B cell (primary cell): ENCODE measurements at regions of chr19 and their contacts with region 1.

Region 1: DNA sequence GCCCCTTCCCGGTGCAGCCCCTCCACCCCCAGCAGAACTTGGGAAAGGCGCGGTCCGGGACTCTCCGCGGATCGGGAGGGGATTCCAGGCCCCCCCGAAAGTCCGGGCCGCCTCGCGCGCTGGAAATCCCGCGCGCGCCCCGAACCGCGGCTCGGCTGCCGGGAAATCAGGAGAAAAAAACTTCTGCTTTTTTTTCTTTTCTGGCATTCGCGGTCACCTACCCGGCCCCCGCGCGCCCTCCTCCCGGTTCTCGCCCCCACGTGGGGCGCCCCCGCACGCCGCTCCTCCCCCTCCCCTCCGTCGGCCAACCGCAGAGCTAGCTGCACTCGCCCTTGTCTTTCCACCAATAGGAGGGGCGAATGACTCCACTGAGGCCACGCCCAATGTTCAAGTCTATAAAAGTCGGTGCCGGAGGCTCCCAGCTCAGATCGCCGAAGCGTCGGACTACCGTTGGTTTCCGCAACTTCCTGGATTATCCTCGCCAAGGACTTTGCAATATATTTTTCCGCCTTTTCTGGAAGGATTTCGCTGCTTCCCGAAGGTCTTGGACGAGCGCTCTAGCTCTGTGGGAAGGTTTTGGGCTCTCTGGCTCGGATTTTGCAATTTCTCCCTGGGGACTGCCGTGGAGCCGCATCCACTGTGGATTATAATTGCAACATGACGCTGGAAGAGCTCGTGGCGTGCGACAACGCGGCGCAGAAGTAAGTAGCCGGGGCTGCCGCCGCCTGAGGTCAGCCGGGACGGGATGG is at the start of gene GADD45B:
- DNase-seq: peak; percentile 99
- ATAC-seq: peak; percentile 71
- H3K4me3 ChIP-seq: peak within 1 kb of the TSS; percentile 94 to 100 (median 100)
- H3K4me3 Mint-ChIP-seq: peak within 1 kb of the TSS; percentile 93
- H3K27ac ChIP-seq: peak within 1 kb of the TSS; percentile 72 to 74
- H3K27ac Mint-ChIP-seq: peak within 1 kb of the TSS; percentile 93
- H3K4me1 ChIP-seq: peaks cover 30 to 47% of the 10 kb centered on the region in 2 donors
- H3K4me1 Mint-ChIP-seq: peaks cover 34% of the 10 kb centered on the region
- H3K27me3 ChIP-seq: no peaks in the 10 kb centered on the region
- H3K27me3 Mint-ChIP-seq: no peaks in the 10 kb centered on the region
- CTCF ChIP-seq: no peak
- total RNA-seq, gene GADD45B: 166 and 167 TPM in 2 replicates

Region 2: DNA sequence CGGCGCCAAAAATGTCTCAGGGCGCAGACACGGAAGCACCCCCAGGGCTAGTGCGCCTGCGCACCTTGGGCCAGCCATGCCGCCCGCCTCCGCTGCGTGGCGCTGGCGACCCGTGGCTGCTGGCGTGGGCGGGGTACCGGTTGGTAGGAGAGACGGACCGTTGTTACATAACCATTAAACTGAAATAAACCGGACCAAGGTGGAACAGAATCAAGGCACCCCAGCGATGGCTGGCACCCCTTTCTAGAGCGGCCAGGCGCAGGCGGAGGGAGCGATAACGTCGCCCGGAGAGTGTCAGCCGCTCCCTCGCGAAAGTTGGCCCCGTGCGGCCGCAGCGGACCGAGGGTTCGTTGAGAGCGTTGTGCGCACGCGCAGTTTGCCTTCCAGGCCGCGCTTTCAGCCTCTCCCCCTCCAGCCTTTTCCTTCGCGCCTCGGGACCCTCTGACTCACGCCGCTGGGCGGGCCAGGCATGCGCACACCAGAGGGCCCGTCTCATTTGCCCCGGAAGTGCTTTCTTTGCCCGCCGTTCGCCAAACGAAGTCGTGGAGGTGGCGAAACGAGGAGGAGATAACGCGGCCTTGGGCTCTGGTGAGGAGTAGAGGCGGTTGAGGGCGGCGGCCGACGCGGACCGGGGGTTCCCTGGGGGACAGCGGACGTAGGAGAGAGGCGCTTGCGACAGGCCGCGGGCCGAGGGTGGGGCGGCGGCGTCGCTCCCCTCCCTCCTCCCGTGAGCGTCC is 239.4 kb before region 1 on chr19 and contains the starts of genes PLEKHJ1 and SF3A2:
- CTCF ChIA-PET with region 1: no interaction called
- POLR2A ChIA-PET with region 1: no interaction called
- intact Hi-C with region 1: loop called (anchors 2 kb)
- DNase-seq: peak; percentile 99
- ATAC-seq: peak; percentile 83
- H3K4me3 ChIP-seq: peak within 1 kb of the TSS; percentile 19 to 94 (median 70)
- H3K4me3 Mint-ChIP-seq: peak within 1 kb of the TSS; percentile 93
- H3K27ac ChIP-seq: peak within 1 kb of the TSS; percentile 97 to 99
- H3K27ac Mint-ChIP-seq: peak within 1 kb of the TSS; percentile 98
- H3K4me1 ChIP-seq: peaks cover 46 to 66% of the 10 kb centered on the region in 2 donors
- H3K4me1 Mint-ChIP-seq: peaks cover 65% of the 10 kb centered on the region
- H3K27me3 ChIP-seq: no peaks in the 10 kb centered on the region
- H3K27me3 Mint-ChIP-seq: no peaks in the 10 kb centered on the region
- CTCF ChIP-seq: peak; percentile 98
- total RNA-seq, gene PLEKHJ1: 82.4 and 86.7 TPM in 2 replicates
- total RNA-seq, gene SF3A2: 129 and 140 TPM in 2 replicates

Region 3: GRCh38 chr19:2294611-2295335 is 181.1 kb before region 1 on chr19:
- CTCF ChIA-PET with region 1: no interaction called
- POLR2A ChIA-PET with region 1: no interaction called
- intact Hi-C with region 1: no loop called
- DNase-seq: no peak
- ATAC-seq: no peak
- H3K4me3 ChIP-seq: peak overlapping the region in 1 of 5 experiments; percentile 9
- H3K4me3 Mint-ChIP-seq: peak overlapping the region; percentile 81
- H3K27ac ChIP-seq: peak overlapping the region in 1 of 2 donors; percentile 55
- H3K27ac Mint-ChIP-seq: peak overlapping the region; percentile 64
- H3K4me1 ChIP-seq: peaks cover 27 to 60% of the 10 kb centered on the region in 2 donors
- H3K4me1 Mint-ChIP-seq: peaks cover 38% of the 10 kb centered on the region
- H3K27me3 ChIP-seq: no peaks in the 10 kb centered on the region
- H3K27me3 Mint-ChIP-seq: no peaks in the 10 kb centered on the region
- CTCF ChIP-seq: no peak

Region 4: GRCh38 chr19:2399582-2399981 is 76.3 kb before region 1 on chr19:
- CTCF ChIA-PET with region 1: no interaction called
- POLR2A ChIA-PET with region 1: no interaction called
- intact Hi-C with region 1: no loop called
- DNase-seq: no peak
- ATAC-seq: no peak
- H3K4me3 ChIP-seq: no peak overlapping the region
- H3K4me3 Mint-ChIP-seq: no peak overlapping the region
- H3K27ac ChIP-seq: no peak overlapping the region
- H3K27ac Mint-ChIP-seq: no peak overlapping the region
- H3K4me1 ChIP-seq: peaks cover 4 to 7% of the 10 kb centered on the region in 2 donors
- H3K4me1 Mint-ChIP-seq: peaks cover 5% of the 10 kb centered on the region
- H3K27me3 ChIP-seq: no peaks in the 10 kb centered on the region
- H3K27me3 Mint-ChIP-seq: no peaks in the 10 kb centered on the region
- CTCF ChIP-seq: no peak

Region 5: GRCh38 chr19:2412449-2412848 is 63.4 kb before region 1 on chr19:
- CTCF ChIA-PET with region 1: no interaction called
- POLR2A ChIA-PET with region 1: no interaction called
- intact Hi-C with region 1: no loop called
- DNase-seq: no peak
- ATAC-seq: no peak
- H3K4me3 ChIP-seq: no peak overlapping the region
- H3K4me3 Mint-ChIP-seq: no peak overlapping the region
- H3K27ac ChIP-seq: no peak overlapping the region
- H3K27ac Mint-ChIP-seq: no peak overlapping the region
- H3K4me1 ChIP-seq: no peaks in the 10 kb centered on the region
- H3K4me1 Mint-ChIP-seq: no peaks in the 10 kb centered on the region
- H3K27me3 ChIP-seq: peaks cover 0 to 5% (median 1%) of the 10 kb centered on the region in 4 experiments
- H3K27me3 Mint-ChIP-seq: peaks cover 9% of the 10 kb centered on the region
- CTCF ChIP-seq: no peak

Region 6: DNA sequence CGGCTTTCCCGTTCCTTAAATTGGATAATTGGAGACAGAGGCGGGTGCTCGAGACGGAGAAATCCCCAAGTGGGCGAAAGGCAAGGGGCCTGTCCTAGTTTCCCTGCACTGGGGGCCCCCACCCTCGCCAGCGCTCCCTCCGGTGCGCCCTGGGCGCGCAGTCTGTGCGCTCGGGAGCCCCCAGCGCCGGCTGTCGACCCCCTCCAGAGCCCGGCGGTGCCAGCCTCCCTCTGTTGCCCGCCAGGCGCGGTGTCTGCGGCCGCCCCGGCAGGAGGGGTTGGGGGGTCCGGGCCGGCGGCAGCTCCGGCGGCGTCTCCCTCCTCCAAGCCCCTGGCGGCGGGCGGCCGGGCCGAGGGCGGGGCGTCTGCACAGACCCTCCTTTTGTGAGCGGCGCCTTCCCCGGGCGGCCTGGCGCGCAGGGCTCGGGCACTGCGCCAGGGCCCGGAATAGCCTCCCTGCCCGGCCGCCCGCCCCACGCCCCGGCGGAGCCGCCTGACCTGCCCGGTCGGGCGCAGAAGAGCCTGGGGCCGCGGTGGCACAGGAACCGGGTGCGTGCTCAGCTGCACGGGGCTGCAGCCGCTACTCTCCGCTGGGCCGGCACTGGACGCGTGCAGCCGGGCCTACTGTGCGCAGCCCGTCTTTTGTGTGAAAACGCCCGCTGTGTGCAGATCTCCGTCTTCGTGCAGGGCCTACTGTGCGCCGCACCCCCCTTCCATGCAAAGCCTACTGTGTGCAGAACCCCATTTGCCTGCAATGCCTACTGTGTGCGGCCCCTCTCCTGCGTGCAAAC is 13.3 kb after region 1 on chr19:
- CTCF ChIA-PET with region 1: interaction called, 5 read pairs
- POLR2A ChIA-PET with region 1: interaction called, 10 read pairs
- intact Hi-C with region 1: loop called (anchors 1 kb)
- DNase-seq: peak; percentile 56
- ATAC-seq: no peak
- H3K4me3 ChIP-seq: no peak overlapping the region
- H3K4me3 Mint-ChIP-seq: peak overlapping the region; percentile 73
- H3K27ac ChIP-seq: no peak overlapping the region
- H3K27ac Mint-ChIP-seq: peak overlapping the region; percentile 32
- H3K4me1 ChIP-seq: peaks cover 46 to 56% of the 10 kb centered on the region in 2 donors
- H3K4me1 Mint-ChIP-seq: peaks cover 58% of the 10 kb centered on the region
- H3K27me3 ChIP-seq: peaks cover 0 to 52% (median 21%) of the 10 kb centered on the region in 4 experiments
- H3K27me3 Mint-ChIP-seq: peaks cover 29% of the 10 kb centered on the region
- CTCF ChIP-seq: no peak

Region 7: DNA sequence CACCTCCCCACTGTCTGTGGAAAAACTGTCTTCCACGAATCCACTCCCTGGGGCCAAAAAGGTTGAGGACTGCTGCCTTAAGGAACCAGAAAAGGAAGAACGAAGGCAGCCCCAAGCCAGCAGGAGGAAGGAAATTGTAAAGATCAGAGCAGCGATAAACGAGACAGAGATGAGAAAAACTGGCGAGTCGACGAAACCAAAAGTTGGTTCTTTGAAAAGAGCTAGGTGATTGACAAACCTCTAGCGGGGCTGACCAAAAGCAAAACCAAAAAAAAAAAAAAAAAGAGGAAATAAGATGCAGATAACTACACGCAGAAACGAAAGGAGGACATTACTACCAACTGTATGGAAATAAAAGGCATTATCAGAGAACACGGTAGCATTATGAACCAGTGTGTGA is 77.0 kb after region 1 on chr19:
- CTCF ChIA-PET with region 1: interaction called, 12 read pairs
- POLR2A ChIA-PET with region 1: interaction called, 14 read pairs
- intact Hi-C with region 1: loop called (anchors 1 kb)
- DNase-seq: peak; percentile 88
- ATAC-seq: peak; percentile 92
- H3K4me3 ChIP-seq: peak overlapping the region in 3 of 5 experiments; percentile 21 to 55 (median 29)
- H3K4me3 Mint-ChIP-seq: peak overlapping the region; percentile 75
- H3K27ac ChIP-seq: peak overlapping the region; percentile 46 to 73
- H3K27ac Mint-ChIP-seq: peak overlapping the region; percentile 69
- H3K4me1 ChIP-seq: peaks cover 8 to 15% of the 10 kb centered on the region in 2 donors
- H3K4me1 Mint-ChIP-seq: peaks cover 23% of the 10 kb centered on the region
- H3K27me3 ChIP-seq: no peaks in the 10 kb centered on the region
- H3K27me3 Mint-ChIP-seq: no peaks in the 10 kb centered on the region
- CTCF ChIP-seq: no peak

Region 8: DNA sequence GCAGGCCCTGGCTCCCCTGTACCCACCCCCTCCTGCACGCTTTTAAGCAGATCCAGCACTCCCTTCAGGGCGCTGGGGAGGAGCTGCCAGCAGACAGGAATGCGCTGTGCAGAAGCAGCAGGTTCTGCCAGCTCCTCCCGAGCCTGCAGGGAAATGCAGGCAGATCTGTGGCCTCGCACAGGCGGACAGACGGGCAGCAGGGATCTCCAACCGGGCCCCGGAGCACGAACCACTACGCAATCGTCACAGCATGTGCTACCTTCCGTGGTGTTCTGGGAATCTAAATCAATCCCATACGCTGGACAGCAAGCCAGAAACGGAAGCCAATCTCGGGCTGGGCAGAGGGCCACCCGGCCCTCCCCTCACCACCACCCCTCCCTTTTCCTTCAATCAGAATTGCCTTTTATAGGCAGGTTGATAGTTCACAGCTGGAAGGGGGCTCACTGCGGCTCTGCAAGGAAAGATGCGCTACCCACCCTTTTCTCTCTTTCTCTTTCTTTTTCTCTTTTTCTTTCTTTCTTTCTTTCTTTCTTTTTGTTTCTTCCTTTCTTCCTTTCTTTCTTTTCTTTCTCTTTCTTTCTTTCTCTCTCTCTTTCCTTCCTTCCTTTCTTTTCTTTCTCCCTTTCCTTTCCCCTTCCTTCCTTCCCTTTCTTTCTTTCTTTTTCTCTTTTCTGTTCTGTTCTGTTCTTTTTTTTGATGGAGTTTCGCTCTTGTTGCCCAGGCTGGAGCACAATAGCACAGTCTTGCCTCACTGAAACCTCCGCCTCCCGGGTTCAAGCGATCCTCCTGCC is 126.7 kb after region 1 on chr19:
- CTCF ChIA-PET with region 1: interaction called, 134 read pairs
- POLR2A ChIA-PET with region 1: interaction called, 14 read pairs
- intact Hi-C with region 1: no loop called
- DNase-seq: no peak
- ATAC-seq: no peak
- H3K4me3 ChIP-seq: no peak overlapping the region
- H3K4me3 Mint-ChIP-seq: no peak overlapping the region
- H3K27ac ChIP-seq: no peak overlapping the region
- H3K27ac Mint-ChIP-seq: no peak overlapping the region
- H3K4me1 ChIP-seq: peaks cover 12 to 26% of the 10 kb centered on the region in 2 donors
- H3K4me1 Mint-ChIP-seq: peaks cover 35% of the 10 kb centered on the region
- H3K27me3 ChIP-seq: no peaks in the 10 kb centered on the region
- H3K27me3 Mint-ChIP-seq: no peaks in the 10 kb centered on the region
- CTCF ChIP-seq: no peak

Region 9: GRCh38 chr19:2627319-2627829 is 151.5 kb after region 1 on chr19:
- CTCF ChIA-PET with region 1: interaction called, 16 read pairs
- POLR2A ChIA-PET with region 1: interaction called, 77 read pairs
- intact Hi-C with region 1: no loop called
- DNase-seq: peak; percentile 88
- ATAC-seq: peak; percentile 62
- H3K4me3 ChIP-seq: peak overlapping the region in 4 of 5 experiments; percentile 13 to 47 (median 24)
- H3K4me3 Mint-ChIP-seq: peak overlapping the region; percentile 86
- H3K27ac ChIP-seq: peak overlapping the region; percentile 96 to 97
- H3K27ac Mint-ChIP-seq: peak overlapping the region; percentile 98
- H3K4me1 ChIP-seq: peaks cover 93 to 99% of the 10 kb centered on the region in 2 donors
- H3K4me1 Mint-ChIP-seq: peaks cover 90% of the 10 kb centered on the region
- H3K27me3 ChIP-seq: no peaks in the 10 kb centered on the region
- H3K27me3 Mint-ChIP-seq: no peaks in the 10 kb centered on the region
- CTCF ChIP-seq: no peak

Region 10: GRCh38 chr19:2702162-2703076 is 226.5 kb after region 1 on chr19 and contains the start of gene GNG7:
- CTCF ChIA-PET with region 1: no interaction called
- POLR2A ChIA-PET with region 1: interaction called, 12 read pairs
- intact Hi-C with region 1: no loop called
- DNase-seq: peak; percentile 94
- ATAC-seq: peak; percentile 98
- H3K4me3 ChIP-seq: peak within 1 kb of the TSS; percentile 58 to 96 (median 77)
- H3K4me3 Mint-ChIP-seq: peak within 1 kb of the TSS; percentile 89
- H3K27ac ChIP-seq: peak within 1 kb of the TSS; percentile 81 to 89
- H3K27ac Mint-ChIP-seq: peak within 1 kb of the TSS; percentile 94
- H3K4me1 ChIP-seq: peaks cover 46 to 50% of the 10 kb centered on the region in 2 donors
- H3K4me1 Mint-ChIP-seq: peaks cover 37% of the 10 kb centered on the region
- H3K27me3 ChIP-seq: no peaks in the 10 kb centered on the region
- H3K27me3 Mint-ChIP-seq: no peaks in the 10 kb centered on the region
- CTCF ChIP-seq: no peak
- total RNA-seq, gene GNG7: 153 and 160 TPM in 2 replicates